ENCODE measurements at regions of chr7 and their contacts with region 1.

Region 1: GRCh38 chr7:44797329-44798251 is 1.1 kb downstream of the PPIA start:
- DNase-seq: peak; percentile 93
- H3K4me3 ChIP-seq: peak overlapping the region; percentile 66
- H3K27ac ChIP-seq: peak overlapping the region; percentile 99
- H3K4me1 ChIP-seq: peaks cover 13% of the 10 kb centered on the region
- H3K27me3 ChIP-seq: no peaks in the 10 kb centered on the region
- CTCF ChIP-seq: peak; percentile 45

Region 2: DNA sequence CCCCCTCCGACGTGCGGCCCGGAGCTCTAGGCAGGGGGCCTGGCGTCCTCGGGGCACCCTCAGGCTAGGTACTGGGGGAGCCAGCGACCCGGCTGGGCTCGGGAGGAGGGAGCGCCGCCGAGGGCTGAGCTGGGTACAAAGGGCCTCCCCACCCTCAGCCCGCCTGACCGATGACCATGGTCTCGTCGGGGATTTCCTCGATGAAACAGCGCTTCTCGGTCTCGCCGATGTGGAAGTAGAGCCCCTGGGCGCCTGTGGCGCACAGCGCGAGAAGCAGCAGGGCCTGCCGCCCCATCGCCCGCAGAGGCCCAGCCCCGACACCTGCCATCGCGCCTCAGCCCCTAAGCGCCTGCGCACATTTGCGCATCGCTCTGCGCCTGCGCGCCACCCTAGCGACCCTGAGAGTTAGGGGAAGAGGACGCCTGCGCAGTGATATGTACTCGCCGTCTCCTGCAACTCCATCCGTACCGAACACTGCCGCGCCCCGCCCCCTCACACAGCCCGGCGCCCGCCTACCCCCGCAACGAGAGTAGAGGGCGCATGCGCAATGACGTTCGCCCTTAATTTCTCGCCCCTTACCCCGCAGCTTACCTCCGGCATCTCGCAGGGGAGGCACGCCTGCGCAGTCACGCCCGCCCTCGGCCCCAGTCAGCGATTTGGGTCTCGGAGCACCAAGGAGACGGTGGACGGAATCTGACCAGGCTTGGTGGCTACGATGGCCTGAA is 215.5 kb before region 1 on chr7 and contains the start of gene TMED4:
- intact Hi-C with region 1: loop called (anchors 5 kb)
- DNase-seq: peak; percentile 99
- H3K4me3 ChIP-seq: peak within 1 kb of the TSS; percentile 89
- H3K27ac ChIP-seq: peak within 1 kb of the TSS; percentile 99
- H3K4me1 ChIP-seq: peaks cover 14% of the 10 kb centered on the region
- H3K27me3 ChIP-seq: no peaks in the 10 kb centered on the region
- CTCF ChIP-seq: no peak
- total RNA-seq, gene TMED4: 81.7 to 96.9 TPM

Measured in colonic mucosa (tissue), 4 donors.